WTC11 (cell line): ENCODE measurements at regions of chr10 and their contacts with region 1.

Region 1: GRCh38 chr10:101840741-101841453 is 2.7 kb downstream of the KCNIP2 start:
- DNase-seq: peak; percentile 94
- ATAC-seq: peak; percentile 54
- H3K4me3 Mint-ChIP-seq: peak overlapping the region; percentile 91
- H3K27ac Mint-ChIP-seq: peak overlapping the region; percentile 79; the same call in 1 of the 2 replicates
- H3K4me1 Mint-ChIP-seq: peaks cover 38% of the 10 kb centered on the region
- H3K27me3 Mint-ChIP-seq: peaks cover 25% of the 10 kb centered on the region
- CTCF ChIP-seq: peak; percentile 93

Region 2: GRCh38 chr10:101602761-101603398 is 238.0 kb before region 1 on chr10:
- CTCF ChIA-PET with region 1: interaction called, 13 read pairs
- POLR2A ChIA-PET with region 1: no interaction called
- DNase-seq: peak; percentile 94
- ATAC-seq: peak; percentile 96
- H3K4me3 Mint-ChIP-seq: no peak overlapping the region
- H3K27ac Mint-ChIP-seq: peak overlapping the region; percentile 45; the same call in 1 of the 2 replicates
- H3K4me1 Mint-ChIP-seq: peaks cover 10% of the 10 kb centered on the region
- H3K27me3 Mint-ChIP-seq: no peaks in the 10 kb centered on the region
- CTCF ChIP-seq: peak; percentile 96

Region 3: GRCh38 chr10:101858723-101859500 is 18.0 kb after region 1 on chr10:
- CTCF ChIA-PET with region 1: interaction called, 17 read pairs
- POLR2A ChIA-PET with region 1: interaction called, 3 read pairs
- DNase-seq: no peak
- ATAC-seq: no peak
- H3K4me3 Mint-ChIP-seq: no peak overlapping the region
- H3K27ac Mint-ChIP-seq: no peak overlapping the region
- H3K4me1 Mint-ChIP-seq: no peaks in the 10 kb centered on the region
- H3K27me3 Mint-ChIP-seq: no peaks in the 10 kb centered on the region; the same call in 1 of the 2 replicates
- CTCF ChIP-seq: no peak

Region 4: GRCh38 chr10:101897633-101898032 is 56.7 kb after region 1 on chr10:
- CTCF ChIA-PET with region 1: interaction called, 26 read pairs
- POLR2A ChIA-PET with region 1: interaction called, 4 read pairs
- DNase-seq: no peak
- ATAC-seq: no peak
- H3K4me3 Mint-ChIP-seq: no peak overlapping the region
- H3K27ac Mint-ChIP-seq: no peak overlapping the region
- H3K4me1 Mint-ChIP-seq: peaks cover 26% of the 10 kb centered on the region
- H3K27me3 Mint-ChIP-seq: no peaks in the 10 kb centered on the region
- CTCF ChIP-seq: no peak

Region 5: DNA sequence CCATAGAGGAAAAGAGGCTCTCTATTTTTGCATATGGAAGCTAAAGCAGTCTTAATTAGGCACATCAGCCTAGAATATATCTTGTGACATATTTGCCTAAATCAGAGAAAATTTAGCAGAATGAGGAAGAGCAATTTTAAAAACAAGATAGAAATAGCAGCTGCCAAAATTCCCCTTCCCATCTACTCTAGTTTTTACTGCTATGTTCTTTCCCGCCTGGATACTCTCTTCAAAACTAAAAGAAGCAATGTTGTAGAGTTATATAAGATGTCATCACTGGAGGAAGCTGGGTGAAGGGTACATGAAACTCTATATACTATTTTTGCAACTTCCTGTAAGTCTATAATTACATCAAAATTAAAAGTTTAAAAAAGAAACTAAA is 128.0 kb after region 1 on chr10:
- CTCF ChIA-PET with region 1: interaction called, 16 read pairs
- POLR2A ChIA-PET with region 1: no interaction called
- DNase-seq: no peak
- ATAC-seq: no peak
- H3K4me3 Mint-ChIP-seq: no peak overlapping the region
- H3K27ac Mint-ChIP-seq: no peak overlapping the region
- H3K4me1 Mint-ChIP-seq: peaks cover 9% of the 10 kb centered on the region
- H3K27me3 Mint-ChIP-seq: no peaks in the 10 kb centered on the region
- CTCF ChIP-seq: no peak

Region 6: GRCh38 chr10:102020938-102021337 is 180.0 kb after region 1 on chr10:
- CTCF ChIA-PET with region 1: interaction called, 23 read pairs
- POLR2A ChIA-PET with region 1: interaction called, 4 read pairs
- DNase-seq: no peak
- ATAC-seq: no peak
- H3K4me3 Mint-ChIP-seq: no peak overlapping the region
- H3K27ac Mint-ChIP-seq: no peak overlapping the region
- H3K4me1 Mint-ChIP-seq: no peaks in the 10 kb centered on the region
- H3K27me3 Mint-ChIP-seq: no peaks in the 10 kb centered on the region
- CTCF ChIP-seq: no peak

Region 7: DNA sequence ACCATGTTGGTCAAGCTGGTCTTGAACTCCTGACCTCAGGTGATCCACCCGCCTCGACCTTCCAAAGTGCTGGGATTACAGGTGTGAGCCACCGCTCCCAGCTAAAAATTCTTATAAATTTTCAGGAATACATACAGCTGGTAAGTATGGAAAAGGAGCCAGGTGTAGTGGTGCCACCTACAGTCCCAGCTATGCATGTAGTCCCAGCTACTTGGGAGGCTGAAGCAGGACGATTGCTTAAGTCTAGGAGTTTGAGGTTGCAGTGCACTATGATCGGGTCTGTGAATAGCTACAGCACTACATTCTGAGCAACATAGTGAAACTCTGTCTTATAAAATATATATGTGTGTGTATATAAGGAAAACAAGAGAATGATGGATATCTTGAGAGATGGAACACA is 260.3 kb after region 1 on chr10:
- CTCF ChIA-PET with region 1: interaction called, 12 read pairs
- POLR2A ChIA-PET with region 1: no interaction called
- DNase-seq: no peak
- ATAC-seq: peak; percentile 76
- H3K4me3 Mint-ChIP-seq: no peak overlapping the region
- H3K27ac Mint-ChIP-seq: no peak overlapping the region
- H3K4me1 Mint-ChIP-seq: no peaks in the 10 kb centered on the region
- H3K27me3 Mint-ChIP-seq: no peaks in the 10 kb centered on the region
- CTCF ChIP-seq: no peak